PC-3 (cell line): ENCODE measurements at regions of chr18 and their contacts with region 1.

Region 1: DNA sequence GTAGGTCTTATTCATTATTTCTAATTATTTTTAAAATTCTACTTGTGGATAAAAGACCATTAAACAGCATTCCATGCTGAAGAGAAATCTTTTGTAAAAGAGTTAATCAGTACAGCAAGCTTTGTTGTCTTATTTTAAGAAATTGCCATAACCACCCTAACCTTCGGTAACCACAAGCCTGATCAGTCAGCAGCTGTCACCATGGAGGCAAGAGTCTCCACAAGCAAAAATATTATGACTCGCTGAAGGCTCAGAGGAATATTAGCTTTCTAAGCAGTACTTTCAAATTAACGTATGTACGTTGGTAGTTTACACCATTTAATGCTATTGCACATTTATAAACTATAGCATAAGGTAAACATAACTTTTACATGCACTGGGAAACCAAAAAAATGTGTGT is 650.5 kb upstream of the LINC00305 start:
- DNase-seq: peak; percentile 68
- ATAC-seq: peak; percentile 92
- H3K4me3 ChIP-seq: no peak overlapping the region
- H3K27ac ChIP-seq: peak overlapping the region; percentile 31
- H3K4me1 ChIP-seq: peaks cover 10% of the 10 kb centered on the region
- H3K27me3 ChIP-seq: no peaks in the 10 kb centered on the region
- CTCF ChIP-seq: no peak

Region 2: DNA sequence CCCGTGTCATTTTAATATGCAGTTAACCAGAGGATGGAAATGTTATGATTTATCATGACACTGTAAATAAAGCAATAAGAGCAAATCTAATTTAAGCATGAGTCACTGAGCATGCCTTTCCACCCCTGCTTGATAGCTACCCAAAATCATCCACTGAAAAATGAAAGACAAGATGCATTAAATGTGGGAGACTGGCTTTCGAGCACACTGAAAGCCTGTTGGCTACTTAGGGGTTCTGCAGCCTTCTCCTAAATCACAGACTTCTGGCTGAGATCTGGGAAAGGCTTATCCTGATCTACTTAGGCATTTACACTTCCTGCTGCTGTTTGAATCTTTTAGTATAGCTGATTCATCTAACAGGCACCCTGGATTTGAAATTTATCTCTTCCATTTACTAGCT is 173.2 kb after region 1 on chr18:
- CTCF ChIA-PET with region 1: no interaction called
- POLR2A ChIA-PET with region 1: no interaction called
- intact Hi-C with region 1: loop called (anchors 5 kb)
- DNase-seq: peak; percentile 33
- ATAC-seq: peak; percentile 82
- H3K4me3 ChIP-seq: no peak overlapping the region
- H3K27ac ChIP-seq: 0 out of 2 replicates have a peak overlapping the region, but pooled peaks have one; percentile 6
- H3K4me1 ChIP-seq: peaks cover 12% of the 10 kb centered on the region; the same call in 1 of the 2 replicates
- H3K27me3 ChIP-seq: no peaks in the 10 kb centered on the region
- CTCF ChIP-seq: no peak